ENCODE measurements at regions of chr3 and their contacts with region 1.

Region 1: DNA sequence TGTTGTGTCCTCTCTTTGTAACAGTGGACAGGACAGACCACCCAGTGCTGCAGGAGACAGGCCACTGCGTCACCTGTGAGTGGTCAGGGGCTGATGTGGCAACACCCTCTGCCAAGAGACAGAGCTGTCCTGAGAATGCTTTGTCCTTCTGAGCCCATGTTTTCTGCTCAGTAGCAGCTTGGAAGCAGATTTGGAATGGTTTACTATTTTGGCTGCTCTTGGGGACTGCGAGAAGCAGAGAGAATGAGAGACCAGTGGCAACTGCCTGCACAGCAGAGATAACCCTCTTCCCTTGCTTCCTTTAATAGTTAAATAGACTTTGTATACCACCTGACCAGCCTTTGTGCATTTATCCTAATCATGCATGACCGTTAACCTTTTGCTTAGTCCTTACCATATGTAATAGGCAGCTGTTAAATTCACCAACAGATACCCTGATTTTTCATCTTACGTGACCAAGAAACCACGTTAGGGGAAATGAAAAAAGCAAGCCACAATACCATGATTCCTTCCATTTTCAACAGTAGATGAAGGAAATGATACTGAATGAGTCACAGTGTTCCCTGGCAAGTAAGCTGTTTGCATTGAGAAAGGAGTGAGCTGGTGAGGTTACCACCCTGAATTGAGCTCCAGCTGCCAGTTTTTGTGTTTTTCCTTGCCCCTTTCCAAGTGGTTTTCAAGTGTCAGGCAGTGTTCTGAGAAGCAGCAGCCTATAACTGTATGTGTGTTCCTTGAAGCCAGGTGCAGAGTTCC is 35.5 kb downstream of the B3GALNT1 start:
- DNase-seq: no peak

Region 2: DNA sequence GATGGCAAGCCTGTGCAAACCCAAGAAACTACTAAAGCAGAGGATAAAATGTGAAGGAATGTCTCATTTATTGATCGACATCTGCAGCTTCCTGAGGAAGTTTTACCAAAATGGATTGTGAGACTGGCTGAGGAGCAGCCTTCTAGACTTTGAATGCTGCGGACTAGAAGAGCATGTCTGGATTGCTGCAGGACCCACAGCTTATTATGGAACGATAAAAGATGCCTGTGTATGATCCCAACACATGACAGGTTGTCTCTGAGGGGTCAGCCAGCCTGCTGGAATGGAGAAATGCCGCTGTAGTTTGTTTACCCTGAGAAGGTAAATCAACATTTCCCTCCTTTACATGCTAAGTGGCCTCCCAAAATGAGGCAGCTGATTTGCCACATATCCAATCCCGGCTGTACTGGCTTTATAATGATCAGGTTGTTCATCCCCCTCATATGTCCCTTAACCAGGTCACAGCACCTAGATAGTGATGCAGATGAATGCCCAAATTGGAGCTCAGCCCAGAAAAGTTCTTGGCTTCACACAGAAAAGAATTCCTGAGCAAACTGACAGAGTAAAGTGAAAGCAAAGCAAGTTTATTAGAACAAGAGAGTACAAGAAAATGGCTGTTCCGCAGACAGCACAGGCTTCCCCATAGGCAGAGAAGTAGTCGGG is 1017.2 kb before region 1 on chr3:
- intact Hi-C with region 1: no loop called
- DNase-seq: no peak

Region 3: DNA sequence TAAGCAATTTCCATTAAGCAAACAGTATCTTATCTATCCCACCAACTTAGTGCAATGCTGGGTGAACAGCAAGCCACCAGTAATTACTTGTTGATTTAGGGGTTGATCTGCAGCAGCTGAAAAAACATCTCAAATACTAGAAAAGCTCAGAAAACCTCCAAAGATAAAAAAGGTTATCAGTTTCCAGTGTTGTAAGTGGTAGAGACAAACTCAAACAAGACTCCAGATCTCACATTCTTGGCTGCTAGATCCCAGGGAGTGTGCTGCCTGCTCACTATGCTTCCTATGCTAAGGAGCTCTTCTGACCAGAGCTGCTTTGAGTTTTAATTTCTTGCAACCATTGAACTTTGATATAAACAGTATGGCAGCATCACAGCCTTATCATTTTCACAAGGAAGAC is 24.2 kb after region 1 on chr3:
- intact Hi-C with region 1: no loop called
- DNase-seq: no peak

Region 4: GRCh38 chr3:162072656-162073164 is 1003.0 kb after region 1 on chr3:
- intact Hi-C with region 1: loop called in 1 of 2 experiments (anchors 10 kb)
- DNase-seq: no peak